ENCODE measurements at regions of chr3 and their contacts with region 1.

Region 1: DNA sequence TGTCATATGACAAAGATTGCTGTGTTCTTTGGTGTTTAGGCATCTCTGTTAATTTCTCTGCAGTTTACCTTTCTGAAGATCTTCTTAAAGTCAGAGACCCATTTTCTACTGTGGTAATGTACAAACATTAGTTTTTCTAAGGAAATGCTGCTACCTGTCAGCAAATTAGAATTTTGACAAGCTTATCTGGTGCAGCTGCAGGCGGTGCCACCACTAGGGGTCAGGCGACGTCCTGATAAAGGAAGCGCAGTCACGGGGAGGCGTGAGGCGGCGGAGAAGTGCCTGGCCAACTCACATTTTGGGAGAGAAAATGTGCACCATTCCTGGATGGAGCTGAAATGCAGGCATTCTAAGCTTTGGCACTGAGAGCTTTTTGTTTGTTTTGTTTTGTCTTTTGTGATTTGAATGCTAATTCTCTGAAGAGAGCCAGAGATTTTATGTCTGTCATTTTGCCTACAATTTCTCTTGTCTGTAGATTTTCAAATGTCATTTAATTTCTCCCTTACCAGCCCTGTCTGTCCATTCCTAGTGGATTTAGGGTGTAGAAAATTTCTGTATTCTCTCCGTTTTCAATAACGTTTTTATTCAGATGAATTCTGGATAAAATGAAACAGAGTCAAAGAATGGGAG is 24.9 kb upstream of the SIAH2 start:
- DNase-seq: peak; percentile 74
- H3K4me3 ChIP-seq: peak overlapping the region in 1 of 2 experiments; percentile 51; a peak in 1 of 4 replicates
- H3K27ac ChIP-seq: no peak overlapping the region
- H3K4me1 ChIP-seq: no peaks in the 10 kb centered on the region; a peak in 1 of 4 replicates
- H3K27me3 ChIP-seq: no peaks in the 10 kb centered on the region; the same call in 1 of the 2 replicates
- CTCF ChIP-seq: peak; percentile 95
- EP300 ChIP-seq: no peak
- RAD21 ChIP-seq: peak; percentile 84

Region 2: GRCh38 chr3:150763122-150763841 is 24.6 kb before region 1 on chr3 and contains the start of gene SIAH2:
- CTCF ChIA-PET with region 1: interaction called, 28 read pairs
- POLR2A ChIA-PET with region 1: interaction called, 3 read pairs
- DNase-seq: peak; percentile 95
- H3K4me3 ChIP-seq: peak within 1 kb of the TSS; percentile 82 to 90
- H3K27ac ChIP-seq: peak within 1 kb of the TSS; percentile 96 to 97
- H3K4me1 ChIP-seq: peaks cover 6 to 17% of the 10 kb centered on the region in 2 experiments; a peak in 3 of 4 replicates
- H3K27me3 ChIP-seq: no peaks in the 10 kb centered on the region
- CTCF ChIP-seq: no peak
- EP300 ChIP-seq: peak in 1 of 2 experiments; percentile 17; a peak in 1 of 4 replicates
- RAD21 ChIP-seq: no peak
- polyA plus RNA-seq, gene SIAH2: 13.5 and 18.4 TPM in 2 replicates

Region 3: DNA sequence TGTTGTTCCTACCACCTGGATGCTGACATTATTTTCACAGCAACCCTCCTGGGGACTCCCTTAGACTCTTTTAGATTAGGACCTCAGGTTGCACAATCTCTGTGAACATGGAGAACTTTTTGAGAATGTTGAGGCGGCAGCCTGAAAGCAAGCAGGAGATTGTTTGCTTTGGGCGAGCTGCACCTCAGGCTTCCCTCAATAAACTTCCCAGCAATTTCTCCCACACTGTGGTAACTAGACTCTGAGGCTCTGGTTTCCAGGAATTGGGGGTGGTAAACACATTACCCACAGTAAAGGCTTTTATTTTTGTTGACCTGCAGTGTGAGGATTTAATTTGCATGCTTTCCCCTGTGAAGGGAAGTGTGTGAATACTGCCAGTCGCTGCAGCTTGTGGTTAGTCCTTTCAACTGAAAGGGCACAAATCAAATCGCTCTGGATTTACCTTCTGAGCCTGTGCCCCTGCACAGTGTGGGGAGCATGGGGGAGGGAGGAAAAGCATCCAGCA is 10.3 kb after region 1 on chr3:
- CTCF ChIA-PET with region 1: interaction called, 23 read pairs
- POLR2A ChIA-PET with region 1: no interaction called
- DNase-seq: no peak
- H3K4me3 ChIP-seq: no peak overlapping the region
- H3K27ac ChIP-seq: no peak overlapping the region
- H3K4me1 ChIP-seq: peaks cover 0 to 4% of the 10 kb centered on the region in 2 experiments; a peak in 1 of 4 replicates
- H3K27me3 ChIP-seq: peaks cover 22% of the 10 kb centered on the region; the same call in 1 of the 2 replicates
- CTCF ChIP-seq: no peak
- EP300 ChIP-seq: no peak
- RAD21 ChIP-seq: no peak

Region 4: DNA sequence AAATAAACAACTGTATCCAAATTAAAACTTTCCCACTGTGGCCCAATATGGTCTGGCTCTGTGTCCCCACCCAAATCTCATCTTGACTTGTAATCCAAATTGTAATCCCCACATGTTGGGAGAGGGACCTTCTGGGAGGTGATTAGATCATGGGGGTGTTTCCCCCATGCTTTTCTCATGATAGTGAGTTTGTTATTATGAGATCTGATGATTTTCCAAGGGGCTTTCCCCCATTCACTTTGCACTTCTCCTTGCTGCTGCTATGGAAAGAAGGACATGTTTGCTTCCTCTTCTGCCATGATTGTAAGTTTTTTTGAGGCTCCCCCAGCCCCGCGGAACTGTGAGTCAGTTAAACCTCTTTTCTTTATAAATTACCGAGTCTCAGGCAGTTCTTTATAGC is 62.3 kb after region 1 on chr3:
- CTCF ChIA-PET with region 1: interaction called, 19 read pairs
- POLR2A ChIA-PET with region 1: no interaction called
- DNase-seq: no peak
- H3K4me3 ChIP-seq: no peak overlapping the region
- H3K27ac ChIP-seq: no peak overlapping the region
- H3K4me1 ChIP-seq: no peaks in the 10 kb centered on the region
- H3K27me3 ChIP-seq: no peaks in the 10 kb centered on the region; the same call in 1 of the 2 replicates
- CTCF ChIP-seq: no peak
- EP300 ChIP-seq: no peak
- RAD21 ChIP-seq: no peak

Region 5: DNA sequence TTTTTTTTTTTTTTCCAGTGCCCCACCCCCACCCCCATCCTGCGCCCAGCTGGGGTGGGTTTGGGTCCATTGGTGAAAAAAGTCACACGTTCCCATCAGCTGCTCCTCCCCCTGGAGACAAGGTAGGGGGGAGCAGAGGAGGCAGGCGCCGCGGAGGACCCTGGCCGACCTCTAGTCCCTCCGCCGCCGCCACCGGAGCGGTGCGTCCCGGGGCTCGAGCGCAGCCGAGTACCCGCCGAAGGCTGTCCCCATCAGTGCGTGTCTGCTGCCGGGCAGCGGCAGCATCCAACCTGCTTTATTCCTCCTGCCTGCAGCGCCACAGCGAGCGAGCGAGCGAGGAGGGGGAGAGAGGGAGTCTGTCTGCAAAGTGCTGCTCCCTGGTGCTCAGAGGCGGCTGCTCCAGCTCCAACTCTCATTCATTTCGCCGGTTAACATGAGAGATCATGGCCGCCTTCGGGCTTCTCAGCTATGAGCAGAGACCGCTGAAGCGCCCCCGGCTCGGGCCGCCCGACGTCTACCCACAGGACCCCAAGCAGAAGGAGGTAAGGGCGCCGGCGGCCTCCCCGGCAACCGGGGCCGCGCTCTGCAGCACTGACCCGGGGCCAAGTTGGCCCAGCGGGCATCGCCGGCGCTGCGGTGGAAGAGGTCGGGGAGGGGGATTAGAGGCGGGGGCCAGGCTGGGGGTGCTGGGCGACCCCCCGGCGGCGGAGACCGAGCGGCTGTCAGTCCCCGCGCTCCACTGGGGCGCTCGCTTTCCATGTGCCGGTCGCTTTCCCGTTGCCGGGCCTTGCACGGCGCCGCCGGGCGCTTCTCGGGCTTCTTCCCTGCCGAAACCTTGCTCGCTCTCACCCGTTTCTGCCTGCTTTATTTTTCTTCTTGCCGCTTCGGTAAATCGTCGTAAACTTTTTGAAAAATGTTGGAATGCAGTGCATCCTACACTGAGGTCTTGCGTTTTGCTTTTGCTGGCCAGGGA is 298.9 kb after region 1 on chr3:
- CTCF ChIA-PET with region 1: interaction called, 13 read pairs
- POLR2A ChIA-PET with region 1: no interaction called
- DNase-seq: peak; percentile 89
- H3K4me3 ChIP-seq: peak overlapping the region; percentile 57 to 65
- H3K27ac ChIP-seq: no peak overlapping the region
- H3K4me1 ChIP-seq: peaks cover 0 to 5% of the 10 kb centered on the region in 2 experiments; a peak in 1 of 4 replicates
- H3K27me3 ChIP-seq: peaks cover 78% of the 10 kb centered on the region
- CTCF ChIP-seq: peak; percentile 57
- EP300 ChIP-seq: no peak
- RAD21 ChIP-seq: peak; percentile 35